ENCODE measurements at regions of chr12 and their contacts with region 1.

Region 1: GRCh38 chr12:54935235-54935951 is 49.2 kb downstream of the TESPA1 start:
- DNase-seq: peak; percentile 41
- H3K4me3 Mint-ChIP-seq: peak overlapping the region; percentile 62
- H3K27ac Mint-ChIP-seq: peak overlapping the region; percentile 99
- H3K4me1 Mint-ChIP-seq: peaks cover 42% of the 10 kb centered on the region
- H3K27me3 Mint-ChIP-seq: no peaks in the 10 kb centered on the region

Region 2: DNA sequence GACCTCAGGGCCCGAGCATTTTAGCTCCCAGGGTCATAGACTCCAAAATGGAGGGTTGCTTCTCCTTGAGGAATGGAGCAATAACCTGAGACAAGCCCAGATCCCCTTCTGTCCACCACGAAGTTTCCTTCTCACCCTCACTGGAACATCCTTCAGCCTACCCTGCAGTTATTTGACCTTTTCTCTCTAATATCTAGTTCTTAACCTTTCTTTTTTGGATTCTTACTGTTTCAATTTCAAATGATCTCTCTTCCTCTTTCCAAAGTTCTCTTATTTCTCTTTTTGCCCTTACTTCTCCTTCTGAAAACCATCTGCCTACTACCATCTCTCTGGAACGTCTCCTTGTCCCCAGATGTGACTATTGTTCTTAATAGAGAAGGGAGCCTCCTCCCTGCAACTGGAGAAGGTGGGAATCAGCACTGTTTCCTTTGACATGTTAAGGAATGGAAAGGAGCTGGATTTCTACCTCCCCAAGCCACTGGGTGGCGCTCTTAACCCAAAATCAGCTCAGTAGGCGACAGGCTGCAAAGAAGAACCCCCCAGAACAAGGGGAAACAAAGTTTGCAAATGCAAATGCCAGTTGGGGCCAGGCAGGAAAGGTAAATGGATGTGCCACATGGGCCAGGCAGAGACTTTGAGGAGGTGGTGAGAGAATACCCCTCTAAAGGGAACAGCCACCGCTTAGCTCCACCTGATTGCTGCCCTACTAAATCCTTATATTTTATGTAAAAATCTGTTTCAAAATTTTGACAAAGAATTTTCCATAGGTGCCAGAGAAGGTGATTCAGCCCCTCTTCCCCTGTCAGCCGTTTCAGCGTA is 408.4 kb before region 1 on chr12:
- intact Hi-C with region 1: loop called (anchors 1 kb)
- DNase-seq: no peak
- H3K4me3 Mint-ChIP-seq: no peak overlapping the region
- H3K27ac Mint-ChIP-seq: no peak overlapping the region
- H3K4me1 Mint-ChIP-seq: peaks cover 10% of the 10 kb centered on the region
- H3K27me3 Mint-ChIP-seq: no peaks in the 10 kb centered on the region

Region 3: DNA sequence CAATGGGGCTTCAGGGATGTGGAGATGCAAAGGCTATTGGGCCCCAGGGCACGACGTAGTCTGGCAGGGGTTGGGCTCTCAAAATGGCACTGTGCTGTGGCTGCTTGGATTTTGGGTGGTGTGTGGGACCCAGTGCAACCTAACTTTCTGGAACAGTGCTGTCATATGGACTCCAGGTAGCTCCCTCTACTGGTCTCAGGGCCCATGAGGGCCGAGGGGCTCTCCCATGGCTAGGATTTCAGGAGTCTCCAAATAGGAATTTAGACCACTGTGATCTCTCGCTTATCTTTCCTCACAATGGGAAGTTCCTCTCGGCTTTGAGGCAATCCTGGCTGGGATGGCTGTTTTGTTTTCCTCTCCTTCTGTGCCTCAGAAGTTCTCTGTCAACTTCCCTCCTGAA is 149.3 kb before region 1 on chr12:
- intact Hi-C with region 1: no loop called
- DNase-seq: no peak
- H3K4me3 Mint-ChIP-seq: no peak overlapping the region
- H3K27ac Mint-ChIP-seq: no peak overlapping the region
- H3K4me1 Mint-ChIP-seq: no peaks in the 10 kb centered on the region
- H3K27me3 Mint-ChIP-seq: peaks cover 8% of the 10 kb centered on the region

Region 4: GRCh38 chr12:54853995-54854566 is 81.3 kb before region 1 on chr12 and contains the start of gene MUCL1:
- intact Hi-C with region 1: loop called (anchors 1 kb)
- DNase-seq: peak; percentile 66
- H3K4me3 Mint-ChIP-seq: no peak within 1 kb of the TSS
- H3K27ac Mint-ChIP-seq: no peak within 1 kb of the TSS
- H3K4me1 Mint-ChIP-seq: peaks cover 15% of the 10 kb centered on the region
- H3K27me3 Mint-ChIP-seq: peaks cover 1% of the 10 kb centered on the region
- total RNA-seq, gene MUCL1: not detected in 2 replicates

Region 5: GRCh38 chr12:54865683-54866324 is 69.6 kb before region 1 on chr12:
- intact Hi-C with region 1: loop called (anchors 1 kb)
- DNase-seq: no peak
- H3K4me3 Mint-ChIP-seq: no peak overlapping the region
- H3K27ac Mint-ChIP-seq: no peak overlapping the region
- H3K4me1 Mint-ChIP-seq: peaks cover 19% of the 10 kb centered on the region
- H3K27me3 Mint-ChIP-seq: peaks cover 18% of the 10 kb centered on the region

Region 6: GRCh38 chr12:54924972-54925707 is 10.3 kb before region 1 on chr12:
- intact Hi-C with region 1: loop called (anchors 1 kb)
- DNase-seq: no peak
- H3K4me3 Mint-ChIP-seq: no peak overlapping the region
- H3K27ac Mint-ChIP-seq: no peak overlapping the region
- H3K4me1 Mint-ChIP-seq: no peaks in the 10 kb centered on the region
- H3K27me3 Mint-ChIP-seq: no peaks in the 10 kb centered on the region

Region 7: GRCh38 chr12:54950071-54950727 is 14.8 kb after region 1 on chr12:
- intact Hi-C with region 1: loop called (anchors 1 kb)
- DNase-seq: no peak
- H3K4me3 Mint-ChIP-seq: peak overlapping the region; percentile 40
- H3K27ac Mint-ChIP-seq: peak overlapping the region; percentile 66
- H3K4me1 Mint-ChIP-seq: peaks cover 52% of the 10 kb centered on the region
- H3K27me3 Mint-ChIP-seq: no peaks in the 10 kb centered on the region

Measured in activated T-helper 1 cell treated with anti-CD3 and anti-CD28 coated beads, Interleukin-12 subunit alpha, Interleukin-12 subunit beta, Interleukin-2, Interleukin-4 antibody, amounts not matched to agents 30 ng/mL and 10 ng/mL and 1 ng/mL, durations not matched to agents 14 hours and 24 hours and 36 hours (primary cell).